ENCODE measurements at regions of chr13 and their contacts with region 1.

Region 1: GRCh38 chr13:30806784-30807183 is 71.4 kb downstream of the ALOX5AP start:
- DNase-seq: no peak

Region 2: GRCh38 chr13:30493658-30494381 is 313.0 kb before region 1 on chr13:
- in situ Hi-C with region 1: no loop called
- DNase-seq: no peak

Region 3: DNA sequence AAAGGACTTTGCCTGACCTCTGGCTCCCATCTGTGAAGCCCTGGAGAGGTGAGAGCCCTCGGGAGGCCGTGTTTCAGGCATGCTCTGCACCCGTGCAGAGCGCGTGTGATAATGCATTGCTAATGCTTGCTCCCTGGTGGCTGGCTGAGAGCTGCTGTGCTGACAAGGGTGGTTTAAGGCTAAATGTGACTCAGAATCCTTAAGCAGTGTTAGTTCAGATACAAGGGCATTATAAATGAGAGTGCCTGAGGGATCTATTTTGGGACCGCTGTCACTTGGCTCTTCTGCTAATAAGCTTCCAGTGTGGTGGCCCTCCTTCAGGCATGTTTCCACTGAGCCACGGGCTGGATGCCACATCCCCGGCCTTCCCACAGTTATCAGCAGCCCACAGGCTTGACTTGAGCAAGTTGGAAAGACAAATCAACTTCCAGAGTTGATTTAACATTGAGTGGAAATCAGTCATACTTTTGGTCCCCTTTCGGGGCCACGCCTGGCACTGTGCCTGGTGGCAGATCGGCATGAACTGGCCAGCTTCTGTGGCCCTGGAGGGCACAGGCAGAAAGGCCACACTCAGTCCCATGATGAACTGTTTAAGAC is 54.5 kb before region 1 on chr13:
- in situ Hi-C with region 1: no loop called
- DNase-seq: peak; percentile 74

Region 4: GRCh38 chr13:30774214-30774730 is 32.5 kb before region 1 on chr13:
- in situ Hi-C with region 1: loop called (anchors 5 kb)
- DNase-seq: no peak

Measured in G401 (cell line).